ENCODE measurements at regions of chr17 and their contacts with region 1.

Region 1: GRCh38 chr17:4130715-4131114 is 12.1 kb downstream of the ZZEF1 start:
- H3K4me3 ChIP-seq: no peak overlapping the region
- H3K27ac ChIP-seq: peak overlapping the region; percentile 24; the same call in 1 of the 2 replicates
- H3K4me1 ChIP-seq: peaks cover 9% of the 10 kb centered on the region
- CTCF ChIP-seq: no peak

Region 2: DNA sequence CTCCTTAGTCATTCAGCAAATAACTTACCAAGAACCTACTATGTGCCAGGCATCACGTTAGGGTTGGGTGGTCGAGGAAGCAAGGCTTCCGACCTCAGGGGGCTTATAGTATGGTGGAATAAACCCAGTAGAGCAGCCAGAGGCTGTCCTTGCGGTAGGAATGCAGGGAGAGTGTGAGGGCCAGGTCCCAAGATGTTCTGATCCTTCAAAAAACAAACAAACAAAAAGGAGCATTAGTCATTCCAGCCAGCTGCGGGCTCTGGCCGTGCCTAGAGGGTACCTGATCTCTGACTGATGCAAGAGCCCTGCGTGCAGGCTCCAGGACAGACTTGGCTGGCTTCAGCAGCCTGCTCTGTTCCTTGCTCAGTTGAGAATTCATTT is 30.5 kb after region 1 on chr17:
- CTCF ChIA-PET with region 1: no interaction called
- POLR2A ChIA-PET with region 1: interaction called, 10 read pairs
- H3K4me3 ChIP-seq: no peak overlapping the region
- H3K27ac ChIP-seq: peak overlapping the region; percentile 51
- H3K4me1 ChIP-seq: peaks cover 16% of the 10 kb centered on the region
- CTCF ChIP-seq: peak; percentile 30; the same call in 1 of the 2 replicates